ENCODE measurements at regions of chr11 and their contacts with region 1.

Region 1: DNA sequence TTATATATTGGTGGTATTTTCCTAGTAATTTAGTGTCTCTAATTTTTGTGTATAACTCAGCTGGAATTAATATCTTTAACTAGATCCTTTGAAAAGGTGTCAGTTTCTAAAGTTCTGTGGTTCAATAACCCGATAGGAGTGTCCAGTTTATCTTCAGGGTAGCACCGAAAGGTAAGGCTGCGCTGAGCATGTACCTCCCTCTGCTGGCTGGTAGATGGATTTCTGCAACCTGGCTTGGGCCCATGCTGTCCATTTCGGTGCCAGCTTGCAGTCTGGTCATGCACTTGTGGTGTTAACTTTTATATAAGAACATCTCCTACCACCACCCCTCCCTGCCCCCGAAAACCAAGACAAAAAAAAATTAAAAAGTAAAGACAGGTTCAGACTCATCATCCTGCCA is 24.7 kb downstream of the EXT2 start:
- DNase-seq: peak; percentile 11
- H3K4me3 Mint-ChIP-seq: no peak overlapping the region
- H3K27ac Mint-ChIP-seq: no peak overlapping the region
- H3K4me1 Mint-ChIP-seq: no peaks in the 10 kb centered on the region
- H3K27me3 Mint-ChIP-seq: no peaks in the 10 kb centered on the region
- CTCF ChIP-seq: peak; percentile 27

Region 2: DNA sequence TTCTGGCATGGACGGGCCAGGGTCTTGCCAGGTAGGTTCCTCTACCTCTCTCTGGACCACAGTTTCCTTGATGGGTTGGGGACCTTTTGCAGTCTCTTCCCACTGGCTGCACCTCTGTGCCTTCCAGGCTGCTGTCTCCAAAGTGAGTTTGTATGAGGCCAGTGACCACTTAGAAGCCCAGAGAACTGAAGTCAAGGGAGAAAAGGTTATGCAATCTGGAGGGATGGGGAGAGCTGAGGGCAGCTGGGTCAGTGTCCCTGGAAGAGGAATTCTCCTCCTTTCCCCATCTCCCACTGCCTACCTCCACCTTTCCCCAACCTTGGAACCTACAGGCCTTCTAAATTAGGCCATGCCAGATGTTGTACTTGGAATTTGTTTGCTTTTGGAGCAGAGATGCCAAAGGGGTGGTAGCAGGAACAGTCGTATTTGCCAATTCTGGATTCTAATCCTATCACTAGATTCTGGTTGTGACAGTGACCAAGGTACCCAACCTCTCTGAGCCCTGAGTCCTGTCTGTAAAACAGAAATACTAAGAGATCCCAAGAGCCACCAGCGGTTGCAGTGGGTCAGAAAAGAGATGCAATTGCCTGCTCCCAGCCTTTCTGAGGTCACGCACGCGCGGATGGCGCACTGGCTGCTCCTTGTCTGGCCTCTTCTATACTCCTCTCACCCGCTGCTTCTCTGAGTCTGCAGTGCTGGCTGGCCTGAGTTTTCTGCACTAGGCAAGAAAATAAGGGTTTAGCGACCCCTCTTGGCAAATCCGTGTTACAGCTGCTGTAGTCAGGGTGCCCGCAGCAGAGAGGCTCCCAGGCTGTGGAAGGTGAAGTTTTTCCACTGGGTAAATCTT is 83.1 kb before region 1 on chr11:
- CTCF ChIA-PET with region 1: no interaction called
- POLR2A ChIA-PET with region 1: no interaction called
- intact Hi-C with region 1: no loop called
- DNase-seq: peak; percentile 67
- H3K4me3 Mint-ChIP-seq: no peak overlapping the region
- H3K27ac Mint-ChIP-seq: no peak overlapping the region
- H3K4me1 Mint-ChIP-seq: no peaks in the 10 kb centered on the region
- H3K27me3 Mint-ChIP-seq: peaks cover 14% of the 10 kb centered on the region
- CTCF ChIP-seq: peak; percentile 64

Region 3: DNA sequence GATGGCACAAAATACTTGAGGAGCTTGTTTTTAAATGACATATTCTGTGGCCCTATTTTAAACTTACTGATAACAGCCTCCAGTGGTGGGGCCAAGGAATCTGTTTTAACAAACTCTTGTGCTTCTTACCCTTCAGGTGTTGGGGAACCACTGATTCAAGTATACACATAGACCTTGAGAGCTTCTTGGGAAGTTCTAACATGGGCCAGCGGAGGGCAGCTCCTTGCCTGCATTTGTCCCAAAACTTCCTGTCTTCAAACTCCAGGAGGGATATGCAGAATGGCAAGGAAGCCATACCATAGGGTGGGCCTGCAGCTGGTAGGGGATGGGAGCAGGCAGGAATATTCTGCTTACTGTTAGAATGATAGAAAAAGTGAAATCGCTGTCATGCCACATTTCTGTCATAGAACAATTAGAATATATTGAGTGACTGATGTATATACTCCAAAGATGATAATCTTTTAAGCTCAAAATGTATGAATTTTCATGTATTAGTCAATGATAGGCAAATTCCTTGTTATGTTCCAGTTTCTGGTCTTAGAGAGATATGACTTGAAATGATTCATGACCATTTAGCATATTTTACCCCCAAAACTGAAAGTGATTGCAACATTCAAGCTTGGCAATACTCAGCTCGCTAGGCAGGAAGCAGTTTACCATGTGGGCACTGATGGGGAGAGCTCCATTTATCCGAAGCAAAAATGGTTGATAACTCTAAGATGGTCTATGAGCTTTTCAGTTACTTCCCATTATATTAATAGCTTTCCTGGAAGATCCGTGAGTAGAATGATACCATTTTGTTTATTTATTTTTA is 15.5 kb before region 1 on chr11:
- CTCF ChIA-PET with region 1: interaction called, 13 read pairs
- POLR2A ChIA-PET with region 1: no interaction called
- intact Hi-C with region 1: no loop called
- DNase-seq: peak; percentile 2
- H3K4me3 Mint-ChIP-seq: no peak overlapping the region
- H3K27ac Mint-ChIP-seq: no peak overlapping the region
- H3K4me1 Mint-ChIP-seq: peaks cover 11% of the 10 kb centered on the region
- H3K27me3 Mint-ChIP-seq: no peaks in the 10 kb centered on the region
- CTCF ChIP-seq: no peak

Measured in MCF 10A (cell line).